Left cardiac atrium (tissue), 4 donors: ENCODE measurements at regions of chr18 and their contacts with region 1.

Region 1: DNA sequence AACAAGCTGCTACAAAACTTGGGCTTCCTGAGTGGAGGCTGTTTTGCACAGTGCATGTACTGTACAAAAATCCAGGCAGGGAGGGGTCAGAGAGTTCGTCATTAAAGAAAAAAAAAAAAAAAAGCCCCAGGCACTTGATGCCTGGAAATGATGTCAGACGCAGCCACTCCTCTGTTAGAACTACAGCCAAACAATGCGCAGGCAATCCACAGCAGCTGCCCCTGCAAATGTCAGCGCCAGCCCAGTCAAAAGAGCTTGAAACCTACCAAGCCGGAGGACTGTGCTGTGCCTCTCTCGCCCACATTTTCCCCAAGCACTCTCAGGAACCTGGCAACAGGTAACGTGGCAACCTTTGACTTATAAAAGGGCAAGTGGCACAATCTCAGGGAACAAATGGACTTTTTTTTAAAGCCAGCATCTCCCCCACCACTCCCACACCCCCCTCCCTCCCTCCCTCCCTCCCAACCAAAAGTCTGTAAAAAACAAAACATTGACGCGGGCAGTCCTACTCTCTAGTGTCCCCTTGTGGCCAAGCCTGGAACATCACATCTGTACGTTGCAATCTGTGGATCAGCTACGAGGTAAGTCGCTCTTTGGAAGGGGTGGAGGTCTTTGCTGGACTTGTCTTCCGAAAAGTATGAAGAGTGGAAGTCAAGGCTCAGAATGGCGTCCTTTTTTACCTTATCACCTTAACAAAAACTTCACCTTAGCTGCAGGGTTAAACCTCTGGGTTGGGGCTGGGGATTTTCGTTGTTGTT is 144.1 kb downstream of the TGIF1 start:
- DNase-seq: peak; percentile 90
- ATAC-seq: peak; percentile 78 to 88

Region 2: DNA sequence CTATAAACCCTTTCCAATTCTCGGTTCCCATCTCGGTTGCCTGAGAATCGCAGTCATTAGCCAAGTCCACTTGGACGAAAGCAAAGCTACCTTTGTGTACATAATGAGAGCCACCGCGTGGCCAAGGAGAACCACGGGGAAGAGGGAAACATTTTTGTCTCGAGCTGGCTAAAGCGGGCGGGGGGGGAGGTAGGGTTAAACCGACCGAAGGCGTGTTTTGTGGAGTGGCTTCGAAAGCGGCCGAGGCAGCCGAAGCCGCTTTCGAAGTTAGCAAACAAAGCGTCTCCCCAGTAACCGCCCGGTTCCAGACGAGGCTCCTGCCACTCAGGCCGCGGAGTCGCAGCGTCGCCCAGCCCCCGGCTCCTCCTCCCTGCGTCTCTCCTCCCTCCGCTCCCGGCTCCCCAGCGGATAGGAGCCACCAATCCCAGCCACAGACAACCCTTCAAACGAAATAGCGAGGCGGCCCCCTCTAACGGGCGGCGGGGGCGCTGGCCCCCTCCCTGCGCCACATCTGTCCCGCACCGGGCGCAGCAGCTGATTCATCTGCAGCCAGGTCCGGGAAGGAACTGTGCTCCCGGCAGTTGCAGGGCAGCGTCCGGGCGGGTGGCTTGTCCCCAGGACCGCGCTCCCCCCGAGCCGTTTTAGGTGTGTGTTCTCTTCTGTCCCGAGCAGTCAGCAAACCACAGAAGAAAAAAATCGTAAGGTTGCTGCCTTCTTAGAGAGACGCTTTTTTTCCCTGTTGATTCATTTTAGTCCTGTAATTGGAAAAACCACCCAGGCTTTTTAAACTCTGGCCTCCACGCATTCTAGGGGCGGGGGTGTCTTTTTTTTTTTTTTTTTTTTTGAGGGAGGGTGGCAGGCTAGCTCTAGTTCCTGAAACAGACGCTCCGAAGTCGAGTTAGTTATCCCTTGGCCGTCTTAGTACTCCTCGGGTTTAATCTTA is 145.9 kb before region 1 on chr18:
- intact Hi-C with region 1: loop called (anchors 2 to 5 kb)
- DNase-seq: peak; percentile 95
- ATAC-seq: peak; percentile 78 to 82

Region 3: GRCh38 chr18:3952031-3952430 is 357.9 kb after region 1 on chr18:
- intact Hi-C with region 1: no loop called
- DNase-seq: no peak
- ATAC-seq: no peak